ENCODE measurements at regions of chr21 and their contacts with region 1.

Region 1: GRCh38 chr21:45820171-45821091 is 161.1 kb upstream of the COL6A1 start:
- DNase-seq: peak; percentile 60
- H3K4me3 ChIP-seq: no peak overlapping the region
- H3K27ac ChIP-seq: no peak overlapping the region
- H3K4me1 ChIP-seq: no peaks in the 10 kb centered on the region
- H3K27me3 ChIP-seq: peaks cover 3 to 4% of the 10 kb centered on the region in 2 experiments
- CTCF ChIP-seq: peak; percentile 77 to 87
- POLR2A ChIP-seq: no peak

Region 2: DNA sequence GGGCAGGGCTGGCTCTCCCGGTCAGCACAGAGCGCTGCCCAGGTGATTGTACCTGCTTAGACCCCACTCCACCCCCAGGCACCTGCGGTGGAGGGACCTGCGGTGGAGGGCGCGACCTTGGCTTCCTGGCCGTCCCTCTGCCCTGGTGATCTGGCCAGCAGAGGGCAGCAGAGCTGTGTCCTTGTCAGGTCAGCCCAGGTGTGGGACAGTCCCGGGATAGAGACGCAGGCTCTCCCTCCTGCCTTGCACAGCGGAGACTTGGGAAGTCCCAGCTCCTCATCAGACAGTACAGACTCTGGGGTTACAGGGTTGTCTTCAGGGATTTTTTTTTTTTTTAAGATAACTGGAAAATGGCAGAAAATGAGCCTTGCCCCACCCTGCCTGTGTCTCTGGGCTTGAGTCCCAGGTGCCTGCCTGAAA is 870.6 kb before region 1 on chr21:
- CTCF ChIA-PET with region 1: no interaction called
- POLR2A ChIA-PET with region 1: no interaction called
- dilution Hi-C with region 1: no loop called
- intact Hi-C with region 1: loop called (anchors 5 kb)
- DNase-seq: peak; percentile 54
- H3K4me3 ChIP-seq: no peak overlapping the region
- H3K27ac ChIP-seq: no peak overlapping the region
- H3K4me1 ChIP-seq: peaks cover 3% of the 10 kb centered on the region
- H3K27me3 ChIP-seq: no peaks in the 10 kb centered on the region
- CTCF ChIP-seq: peak; percentile 88 to 89
- POLR2A ChIP-seq: no peak

Region 3: GRCh38 chr21:46442938-46443337 is 622.5 kb after region 1 on chr21:
- CTCF ChIA-PET with region 1: no interaction called
- POLR2A ChIA-PET with region 1: no interaction called
- dilution Hi-C with region 1: no loop called
- intact Hi-C with region 1: no loop called
- DNase-seq: no peak
- H3K4me3 ChIP-seq: no peak overlapping the region
- H3K27ac ChIP-seq: no peak overlapping the region
- H3K4me1 ChIP-seq: no peaks in the 10 kb centered on the region
- H3K27me3 ChIP-seq: no peaks in the 10 kb centered on the region
- CTCF ChIP-seq: no peak
- POLR2A ChIP-seq: no peak